Naive thymus-derived CD4-positive, alpha-beta T cell (primary cell): ENCODE measurements at regions of chr11 and their contacts with region 1.

Region 1: GRCh38 chr11:123454060-123454651 is 24.1 kb downstream of the GRAMD1B start:
- DNase-seq: peak in 2 of 9 donors; percentile 19 to 75
- ATAC-seq: peak; percentile 62
- H3K4me3 ChIP-seq: no peak overlapping the region
- H3K4me3 Mint-ChIP-seq: peak overlapping the region in 6 of 10 donors; percentile 3 to 73 (median 8)
- H3K27ac ChIP-seq: no peak overlapping the region
- H3K27ac Mint-ChIP-seq: peak overlapping the region in 7 of 9 donors; percentile 2 to 94 (median 27)
- H3K4me1 ChIP-seq: peaks cover 4 to 22% of the 10 kb centered on the region in 2 donors
- H3K4me1 Mint-ChIP-seq: peaks cover 10 to 90% (median 36%) of the 10 kb centered on the region in 7 donors
- H3K27me3 ChIP-seq: no peaks in the 10 kb centered on the region
- H3K27me3 Mint-ChIP-seq: no peaks in the 10 kb centered on the region

Region 2: DNA sequence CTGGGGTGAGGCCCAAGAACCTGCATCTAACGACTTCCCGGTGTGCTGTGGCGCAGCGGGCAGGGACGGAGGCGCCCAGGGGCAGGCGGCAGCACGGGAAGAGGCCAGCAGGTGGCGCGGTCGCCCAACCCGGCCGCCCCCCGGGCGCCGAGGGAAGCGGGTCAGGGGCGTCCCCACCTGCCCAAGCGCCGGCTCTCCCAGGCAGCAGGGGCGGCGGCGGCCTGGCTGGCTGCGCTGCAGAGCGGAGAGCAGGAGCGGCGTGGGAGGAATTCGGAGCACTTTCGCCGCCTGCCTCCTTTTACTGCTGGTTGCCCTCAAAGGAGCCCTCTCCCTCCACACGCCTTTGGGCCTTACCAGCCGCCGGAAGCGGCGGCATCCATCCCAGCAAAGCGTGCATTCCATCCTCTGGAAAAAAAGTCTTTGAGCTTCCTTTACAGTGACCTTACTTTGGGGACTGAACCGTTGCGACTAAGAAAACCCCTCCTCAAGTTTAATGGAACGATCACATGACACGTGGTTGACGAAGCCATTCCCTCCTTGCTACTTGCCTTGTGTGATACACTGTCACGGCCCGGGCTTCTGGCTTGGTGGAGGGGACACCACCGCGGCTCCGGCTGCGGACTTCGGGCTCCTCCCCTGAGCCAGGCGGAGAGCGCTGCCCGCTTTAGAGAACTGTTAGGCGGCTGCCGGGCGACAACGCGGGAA is 152.3 kb before region 1 on chr11:
- CTCF ChIA-PET with region 1: no interaction called
- POLR2A ChIA-PET with region 1: no interaction called
- intact Hi-C with region 1: loop called in 1 of 2 experiments (anchors 1 kb)
- DNase-seq: peak; percentile 20 to 87 (median 50)
- ATAC-seq: peak; percentile 88
- H3K4me3 ChIP-seq: peak overlapping the region; percentile 40
- H3K4me3 Mint-ChIP-seq: peak overlapping the region; percentile 61 to 77 (median 70)
- H3K27ac ChIP-seq: no peak overlapping the region
- H3K27ac Mint-ChIP-seq: peak overlapping the region in 1 of 9 donors; percentile 68
- H3K4me1 ChIP-seq: peaks cover 11 to 25% of the 10 kb centered on the region in 2 donors
- H3K4me1 Mint-ChIP-seq: peaks cover 0 to 52% (median 21%) of the 10 kb centered on the region in 7 donors
- H3K27me3 ChIP-seq: no peaks in the 10 kb centered on the region
- H3K27me3 Mint-ChIP-seq: peaks cover 2 to 15% (median 12%) of the 10 kb centered on the region in 5 donors

Region 3: DNA sequence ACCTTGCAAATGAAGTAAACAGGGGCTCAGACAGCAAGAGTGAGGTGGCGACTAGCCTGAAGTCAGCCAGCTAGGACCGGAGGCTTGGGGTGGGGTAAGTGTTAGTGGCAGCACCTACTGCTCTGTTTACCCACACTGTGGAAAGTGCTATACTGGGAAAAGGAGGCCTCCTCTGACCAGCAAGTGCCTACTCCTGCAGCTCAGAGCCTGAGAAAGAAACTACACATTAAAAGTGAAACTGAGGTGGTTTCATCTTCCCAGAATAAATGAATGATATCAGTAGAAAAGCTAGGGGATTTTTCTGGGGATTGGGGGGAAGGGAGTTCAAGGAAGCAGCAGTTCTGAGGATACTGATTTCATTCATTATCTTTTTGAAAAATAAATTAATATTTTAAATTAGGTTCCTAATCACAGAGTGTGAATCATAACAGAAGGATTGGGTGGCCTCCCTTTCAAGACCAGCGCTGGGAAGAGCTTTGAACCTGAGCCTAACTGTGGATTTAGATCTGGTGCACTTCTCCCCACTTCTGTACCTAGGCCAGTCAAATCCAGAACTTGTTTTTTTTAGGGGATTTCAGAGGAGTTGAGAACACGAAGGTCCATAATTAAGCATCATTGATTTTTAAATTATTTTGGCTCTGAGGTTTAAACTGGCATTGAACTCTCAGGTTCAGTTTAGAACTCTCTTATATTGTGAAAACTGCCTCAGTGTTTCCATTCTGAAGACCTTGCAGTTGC is 72.2 kb before region 1 on chr11:
- CTCF ChIA-PET with region 1: no interaction called
- POLR2A ChIA-PET with region 1: no interaction called
- intact Hi-C with region 1: loop called in 1 of 2 experiments (anchors 1 kb)
- DNase-seq: peak in 1 of 9 donors; percentile 65
- ATAC-seq: peak; percentile 45
- H3K4me3 ChIP-seq: no peak overlapping the region
- H3K4me3 Mint-ChIP-seq: peak overlapping the region in 1 of 10 donors; percentile 77
- H3K27ac ChIP-seq: no peak overlapping the region
- H3K27ac Mint-ChIP-seq: peak overlapping the region in 1 of 9 donors; percentile 86
- H3K4me1 ChIP-seq: peaks cover 0 to 6% of the 10 kb centered on the region in 2 donors
- H3K4me1 Mint-ChIP-seq: peaks cover 0 to 48% (median 3%) of the 10 kb centered on the region in 7 donors
- H3K27me3 ChIP-seq: peaks cover 0 to 3% of the 10 kb centered on the region in 2 donors
- H3K27me3 Mint-ChIP-seq: no peaks in the 10 kb centered on the region

Region 4: GRCh38 chr11:123438191-123438627 is 15.9 kb before region 1 on chr11:
- CTCF ChIA-PET with region 1: no interaction called
- POLR2A ChIA-PET with region 1: interaction called, 7 read pairs
- intact Hi-C with region 1: loop called in 1 of 2 experiments (anchors 1 kb)
- DNase-seq: no peak
- ATAC-seq: no peak
- H3K4me3 ChIP-seq: no peak overlapping the region
- H3K4me3 Mint-ChIP-seq: peak overlapping the region in 2 of 10 donors; percentile 3 to 69
- H3K27ac ChIP-seq: no peak overlapping the region
- H3K27ac Mint-ChIP-seq: peak overlapping the region in 2 of 9 donors; percentile 69 to 89
- H3K4me1 ChIP-seq: no peaks in the 10 kb centered on the region
- H3K4me1 Mint-ChIP-seq: peaks cover 0 to 88% (median 13%) of the 10 kb centered on the region in 7 donors
- H3K27me3 ChIP-seq: no peaks in the 10 kb centered on the region
- H3K27me3 Mint-ChIP-seq: no peaks in the 10 kb centered on the region

Region 5: DNA sequence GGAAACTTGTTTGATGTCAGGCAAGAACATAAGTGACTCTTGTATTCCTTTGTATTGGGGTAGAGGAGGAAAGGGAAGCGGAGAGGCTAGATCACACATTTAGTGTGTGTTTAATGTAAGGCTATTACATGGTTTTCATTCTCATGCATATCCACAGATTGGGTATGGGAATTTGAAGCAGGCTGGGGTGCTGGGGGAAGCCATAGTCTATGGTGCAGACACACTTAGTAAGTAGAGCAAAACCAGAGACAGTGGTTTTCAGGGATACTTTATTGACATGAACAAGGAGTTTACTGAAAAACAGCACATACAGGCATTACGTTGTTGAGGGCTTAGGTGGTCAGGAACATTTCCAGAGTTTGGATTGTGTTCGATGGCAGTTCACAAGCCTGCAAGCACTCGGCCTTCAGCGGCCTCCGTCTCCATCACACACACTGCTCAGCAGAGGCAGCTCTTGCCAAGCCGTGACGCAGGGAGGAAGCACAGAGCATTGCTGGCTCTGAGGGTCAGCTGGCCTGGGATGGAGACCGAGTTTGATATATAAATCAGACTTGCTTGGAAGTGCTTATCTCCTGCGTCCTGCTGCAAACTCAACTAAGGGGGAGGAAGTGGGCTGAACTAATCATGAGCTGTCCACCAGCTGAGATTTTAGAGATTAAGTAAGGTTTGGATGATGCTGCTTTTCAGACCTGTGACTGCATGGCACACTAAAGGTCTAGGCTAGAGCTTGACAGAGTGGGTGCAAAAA is 175.0 kb after region 1 on chr11:
- CTCF ChIA-PET with region 1: no interaction called
- POLR2A ChIA-PET with region 1: no interaction called
- intact Hi-C with region 1: no loop called
- DNase-seq: no peak
- ATAC-seq: peak; percentile 22
- H3K4me3 ChIP-seq: no peak overlapping the region
- H3K4me3 Mint-ChIP-seq: no peak overlapping the region
- H3K27ac ChIP-seq: no peak overlapping the region
- H3K27ac Mint-ChIP-seq: no peak overlapping the region
- H3K4me1 ChIP-seq: no peaks in the 10 kb centered on the region
- H3K4me1 Mint-ChIP-seq: no peaks in the 10 kb centered on the region
- H3K27me3 ChIP-seq: no peaks in the 10 kb centered on the region
- H3K27me3 Mint-ChIP-seq: peaks cover 0 to 16% (median 4%) of the 10 kb centered on the region in 5 donors

Region 6: DNA sequence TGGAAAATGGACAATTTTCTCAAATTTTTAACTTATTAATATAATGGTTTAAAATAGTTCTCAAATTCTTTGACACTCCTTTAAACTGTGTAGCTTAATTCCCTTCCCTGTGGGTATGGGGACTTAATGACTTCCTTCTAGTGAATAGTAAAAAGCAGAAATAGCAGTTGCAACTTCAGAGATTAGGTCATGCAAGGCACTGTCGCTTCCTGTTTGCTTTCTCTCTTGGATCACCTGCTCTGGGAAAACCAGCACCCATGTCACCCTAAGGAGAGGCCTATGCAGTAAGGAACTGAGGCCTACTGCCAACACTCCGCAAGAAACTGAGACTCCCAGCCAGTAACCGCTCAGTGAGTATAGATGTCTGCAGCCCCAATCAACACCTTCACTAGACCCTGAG is 1151.6 kb after region 1 on chr11:
- CTCF ChIA-PET with region 1: no interaction called
- POLR2A ChIA-PET with region 1: no interaction called
- intact Hi-C with region 1: no loop called
- DNase-seq: no peak
- ATAC-seq: peak; percentile 63
- H3K4me3 ChIP-seq: no peak overlapping the region
- H3K4me3 Mint-ChIP-seq: no peak overlapping the region
- H3K27ac ChIP-seq: no peak overlapping the region
- H3K27ac Mint-ChIP-seq: no peak overlapping the region
- H3K4me1 ChIP-seq: no peaks in the 10 kb centered on the region
- H3K4me1 Mint-ChIP-seq: peaks cover 0 to 2% (median 0%) of the 10 kb centered on the region in 7 donors
- H3K27me3 ChIP-seq: no peaks in the 10 kb centered on the region
- H3K27me3 Mint-ChIP-seq: peaks cover 0 to 15% (median 7%) of the 10 kb centered on the region in 5 donors